Naive thymus-derived CD4-positive, alpha-beta T cell (primary cell): ENCODE measurements at regions of chr20 and their contacts with region 1.

Region 1: DNA sequence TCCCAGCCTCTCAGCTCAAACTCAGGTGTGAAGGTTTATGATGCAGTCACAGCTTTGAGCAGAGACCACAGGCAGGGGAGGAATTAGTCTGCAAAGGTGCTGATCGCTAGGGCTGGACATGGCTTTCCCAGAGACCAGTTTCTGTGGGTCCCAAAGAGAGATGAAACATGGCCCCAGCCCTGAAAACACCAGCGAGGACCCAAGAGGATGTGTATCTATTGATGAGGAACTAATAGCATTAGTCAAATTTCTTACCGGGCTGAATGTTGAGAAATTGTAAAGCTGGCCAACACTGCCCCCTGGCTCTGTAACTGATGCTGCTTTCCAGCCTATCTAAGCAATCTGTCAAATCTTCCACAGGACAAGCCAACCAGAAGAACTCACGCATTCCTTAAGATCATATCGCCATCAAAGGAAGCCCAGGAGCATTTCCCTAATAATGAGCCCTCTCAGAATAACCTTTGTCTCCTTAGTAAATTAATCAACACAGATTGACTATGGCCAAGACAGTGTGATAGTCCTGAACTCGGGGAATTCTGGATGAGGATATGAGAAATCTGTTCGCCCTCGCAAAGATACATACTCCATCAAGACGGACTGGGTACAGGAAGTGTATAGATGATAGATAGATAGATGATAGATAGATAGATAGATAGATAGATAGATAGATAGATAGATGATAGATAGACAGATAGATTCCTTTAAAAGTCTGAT is 7.8 kb upstream of the ACSS1 start:
- DNase-seq: peak in 8 of 9 donors; percentile 37 to 72 (median 68)
- ATAC-seq: peak; percentile 87
- H3K4me3 ChIP-seq: no peak overlapping the region
- H3K4me3 Mint-ChIP-seq: no peak overlapping the region
- H3K27ac ChIP-seq: no peak overlapping the region
- H3K27ac Mint-ChIP-seq: no peak overlapping the region
- H3K4me1 ChIP-seq: no peaks in the 10 kb centered on the region
- H3K4me1 Mint-ChIP-seq: peaks cover 0 to 8% (median 5%) of the 10 kb centered on the region in 7 donors
- H3K27me3 ChIP-seq: no peaks in the 10 kb centered on the region
- H3K27me3 Mint-ChIP-seq: peaks cover 0 to 51% (median 18%) of the 10 kb centered on the region in 5 donors

Region 2: DNA sequence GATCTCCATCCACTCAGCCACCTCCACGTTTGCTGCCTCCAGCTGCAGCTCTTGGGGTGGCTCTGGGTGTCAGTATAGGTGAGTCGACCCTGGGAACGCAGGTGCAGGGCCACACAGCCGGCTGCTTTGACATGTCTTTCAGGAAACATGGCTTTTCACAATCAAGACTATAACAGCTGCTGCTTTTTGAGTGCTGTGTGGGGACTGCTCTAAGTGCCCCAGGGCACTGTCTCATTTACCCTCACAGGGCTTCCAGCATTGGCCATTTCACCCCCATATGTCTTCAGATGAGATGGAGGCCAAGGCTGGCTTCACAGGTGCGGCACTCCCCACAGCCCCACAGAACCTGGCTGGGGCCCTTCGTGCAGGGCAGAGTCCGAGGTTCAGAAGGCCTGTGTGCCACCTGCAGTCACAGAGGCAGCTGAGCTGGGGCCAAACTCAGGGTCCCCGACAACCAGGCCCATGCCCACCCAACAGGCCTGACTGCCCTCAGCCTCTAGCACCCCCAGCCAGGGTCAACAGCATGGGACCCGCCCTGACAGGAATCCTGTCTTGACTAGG is 131.6 kb before region 1 on chr20:
- CTCF ChIA-PET with region 1: no interaction called
- POLR2A ChIA-PET with region 1: no interaction called
- intact Hi-C with region 1: loop called in 1 of 2 experiments (anchors 2 kb)
- DNase-seq: no peak
- ATAC-seq: no peak
- H3K4me3 ChIP-seq: no peak overlapping the region
- H3K4me3 Mint-ChIP-seq: no peak overlapping the region
- H3K27ac ChIP-seq: no peak overlapping the region
- H3K27ac Mint-ChIP-seq: no peak overlapping the region
- H3K4me1 ChIP-seq: peaks cover 16 to 30% of the 10 kb centered on the region in 2 donors
- H3K4me1 Mint-ChIP-seq: peaks cover 19 to 50% (median 25%) of the 10 kb centered on the region in 7 donors
- H3K27me3 ChIP-seq: no peaks in the 10 kb centered on the region
- H3K27me3 Mint-ChIP-seq: no peaks in the 10 kb centered on the region

Region 3: DNA sequence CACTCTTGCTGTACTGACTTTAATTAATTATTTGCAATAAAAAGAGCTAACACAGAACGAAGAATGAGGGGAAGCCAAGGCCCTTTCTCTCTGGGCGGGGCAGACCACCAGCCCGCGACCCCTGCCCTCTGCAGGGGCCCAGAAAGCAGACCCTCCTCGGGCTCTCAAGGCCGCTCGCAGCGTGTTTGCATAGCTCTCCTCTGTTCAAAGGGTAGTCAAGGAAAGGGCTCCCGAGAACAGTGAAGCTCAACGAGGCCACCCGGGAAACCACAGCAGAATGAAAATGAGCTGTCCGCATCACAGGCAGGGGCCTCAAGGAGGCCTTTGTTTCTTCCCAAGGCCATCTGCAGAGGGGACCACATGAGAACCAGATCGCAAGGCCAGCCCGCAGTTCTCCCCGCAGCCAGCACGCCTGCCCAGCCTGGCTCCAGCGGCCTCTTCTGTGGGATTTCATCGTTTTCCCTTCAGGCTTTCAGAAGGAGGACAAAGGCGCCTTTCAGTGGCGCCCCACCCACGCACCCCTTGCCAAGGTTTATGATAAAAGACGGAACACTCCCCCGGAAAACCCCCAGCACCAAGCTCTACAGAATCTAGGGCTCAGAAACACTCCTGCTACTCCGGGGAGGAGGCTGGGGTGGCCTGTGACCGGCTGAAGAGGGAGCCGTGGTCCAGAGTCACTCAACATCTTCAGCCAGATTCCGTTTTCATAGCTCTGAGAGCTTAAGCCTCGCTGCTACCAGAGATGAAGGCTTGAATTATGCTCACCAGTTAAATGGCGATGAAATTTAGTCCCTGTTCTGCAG is 33.1 kb before region 1 on chr20:
- CTCF ChIA-PET with region 1: interaction called, 16 read pairs
- POLR2A ChIA-PET with region 1: no interaction called
- intact Hi-C with region 1: no loop called
- DNase-seq: no peak
- ATAC-seq: no peak
- H3K4me3 ChIP-seq: no peak overlapping the region
- H3K4me3 Mint-ChIP-seq: no peak overlapping the region
- H3K27ac ChIP-seq: no peak overlapping the region
- H3K27ac Mint-ChIP-seq: no peak overlapping the region
- H3K4me1 ChIP-seq: peaks cover 10 to 22% of the 10 kb centered on the region in 2 donors
- H3K4me1 Mint-ChIP-seq: peaks cover 23 to 55% (median 42%) of the 10 kb centered on the region in 7 donors
- H3K27me3 ChIP-seq: no peaks in the 10 kb centered on the region
- H3K27me3 Mint-ChIP-seq: no peaks in the 10 kb centered on the region

Region 4: DNA sequence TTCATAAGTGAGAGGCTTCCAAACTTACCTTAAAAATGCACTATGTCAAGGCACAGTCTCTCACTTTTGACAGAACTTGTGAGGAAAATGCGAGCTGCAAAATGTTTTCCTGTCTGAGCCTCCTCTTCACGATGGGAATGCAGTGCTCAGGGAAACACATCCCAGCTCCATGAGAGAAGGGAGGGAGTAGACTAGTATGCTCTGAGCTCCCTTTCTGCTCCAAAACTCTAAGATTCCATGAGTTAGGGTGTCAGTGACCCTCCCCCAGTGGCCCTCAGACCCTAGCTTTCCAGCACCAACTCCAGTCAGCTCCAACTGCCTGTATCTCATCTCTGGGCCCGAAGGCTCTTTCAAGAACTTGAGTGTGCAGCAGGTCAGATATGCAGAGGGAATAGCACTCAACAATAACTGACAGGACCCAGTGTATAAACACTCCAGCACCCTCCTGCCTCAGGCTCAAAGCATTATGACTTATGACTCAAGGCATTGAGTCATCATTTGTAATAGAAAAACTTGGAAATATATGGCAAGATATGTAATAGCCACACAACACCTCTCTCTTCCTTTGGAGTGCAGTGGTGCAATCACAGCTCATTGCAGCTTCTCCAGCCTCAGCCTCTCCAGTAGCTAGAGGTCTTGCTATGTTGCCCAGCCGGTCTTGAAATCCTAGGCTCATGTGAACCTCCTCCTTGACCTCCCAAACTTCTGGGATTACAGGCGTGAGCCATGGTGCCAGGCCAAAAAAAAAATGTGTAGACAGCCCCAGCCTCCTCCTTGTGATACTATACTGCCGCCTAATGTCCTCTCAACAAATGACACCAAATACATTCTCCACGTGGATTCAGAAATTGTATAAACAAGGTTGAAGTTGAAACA is 113.0 kb after region 1 on chr20:
- CTCF ChIA-PET with region 1: interaction called, 4 read pairs
- POLR2A ChIA-PET with region 1: no interaction called
- intact Hi-C with region 1: loop called (anchors 1 to 2 kb)
- DNase-seq: peak in 6 of 9 donors; percentile 21 to 52 (median 46)
- ATAC-seq: peak; percentile 82
- H3K4me3 ChIP-seq: no peak overlapping the region
- H3K4me3 Mint-ChIP-seq: no peak overlapping the region
- H3K27ac ChIP-seq: no peak overlapping the region
- H3K27ac Mint-ChIP-seq: peak overlapping the region in 1 of 9 donors; percentile 38
- H3K4me1 ChIP-seq: no peaks in the 10 kb centered on the region
- H3K4me1 Mint-ChIP-seq: no peaks in the 10 kb centered on the region
- H3K27me3 ChIP-seq: no peaks in the 10 kb centered on the region
- H3K27me3 Mint-ChIP-seq: peaks cover 4 to 27% (median 7%) of the 10 kb centered on the region in 5 donors

Region 5: GRCh38 chr20:25254986-25255680 is 189.4 kb after region 1 on chr20:
- CTCF ChIA-PET with region 1: no interaction called
- POLR2A ChIA-PET with region 1: no interaction called
- intact Hi-C with region 1: loop called in 1 of 2 experiments (anchors 1 kb)
- DNase-seq: peak in 1 of 9 donors; percentile 42
- ATAC-seq: no peak
- H3K4me3 ChIP-seq: no peak overlapping the region
- H3K4me3 Mint-ChIP-seq: peak overlapping the region in 1 of 10 donors; percentile 50
- H3K27ac ChIP-seq: no peak overlapping the region
- H3K27ac Mint-ChIP-seq: peak overlapping the region in 5 of 9 donors; percentile 33 to 92 (median 54)
- H3K4me1 ChIP-seq: peaks cover 0 to 18% of the 10 kb centered on the region in 2 donors
- H3K4me1 Mint-ChIP-seq: peaks cover 32 to 80% (median 74%) of the 10 kb centered on the region in 7 donors
- H3K27me3 ChIP-seq: no peaks in the 10 kb centered on the region
- H3K27me3 Mint-ChIP-seq: no peaks in the 10 kb centered on the region